Mammary epithelial cell (primary cell): ENCODE measurements at regions of chr1 and their contacts with region 1.

Region 1: GRCh38 chr1:203463469-203464062 is 12.0 kb upstream of the PRELP start:
- DNase-seq: no peak
- H3K4me3 ChIP-seq: no peak overlapping the region
- H3K27ac ChIP-seq: no peak overlapping the region
- H3K4me1 ChIP-seq: peaks cover 17% of the 10 kb centered on the region
- H3K27me3 ChIP-seq: no peaks in the 10 kb centered on the region
- CTCF ChIP-seq: peak in 1 of 2 donors; percentile 8

Region 2: GRCh38 chr1:203368624-203369451 is 94.7 kb before region 1 on chr1:
- CTCF ChIA-PET with region 1: no interaction called
- dilution Hi-C with region 1: loop called (anchors 5 kb)
- in situ Hi-C with region 1: no loop called
- intact Hi-C with region 1: no loop called
- DNase-seq: peak; percentile 81
- H3K4me3 ChIP-seq: no peak overlapping the region
- H3K27ac ChIP-seq: no peak overlapping the region
- H3K4me1 ChIP-seq: peaks cover 14% of the 10 kb centered on the region
- H3K27me3 ChIP-seq: no peaks in the 10 kb centered on the region
- CTCF ChIP-seq: peak; percentile 53 to 66

Region 3: GRCh38 chr1:203428981-203429599 is 34.5 kb before region 1 on chr1:
- CTCF ChIA-PET with region 1: no interaction called
- dilution Hi-C with region 1: loop called (anchors 5 kb)
- in situ Hi-C with region 1: no loop called
- intact Hi-C with region 1: no loop called
- DNase-seq: peak; percentile 37
- H3K4me3 ChIP-seq: no peak overlapping the region
- H3K27ac ChIP-seq: no peak overlapping the region
- H3K4me1 ChIP-seq: no peaks in the 10 kb centered on the region
- H3K27me3 ChIP-seq: peaks cover 3% of the 10 kb centered on the region
- CTCF ChIP-seq: no peak

Region 4: GRCh38 chr1:203480525-203481084 is 17.0 kb after region 1 on chr1:
- CTCF ChIA-PET with region 1: no interaction called
- dilution Hi-C with region 1: no loop called
- in situ Hi-C with region 1: no loop called
- intact Hi-C with region 1: loop called (anchors 2 kb)
- DNase-seq: peak; percentile 82
- H3K4me3 ChIP-seq: no peak overlapping the region
- H3K27ac ChIP-seq: peak overlapping the region; percentile 1
- H3K4me1 ChIP-seq: peaks cover 21% of the 10 kb centered on the region
- H3K27me3 ChIP-seq: no peaks in the 10 kb centered on the region
- CTCF ChIP-seq: no peak